ENCODE measurements at regions of chr20 and their contacts with region 1.

Region 1: DNA sequence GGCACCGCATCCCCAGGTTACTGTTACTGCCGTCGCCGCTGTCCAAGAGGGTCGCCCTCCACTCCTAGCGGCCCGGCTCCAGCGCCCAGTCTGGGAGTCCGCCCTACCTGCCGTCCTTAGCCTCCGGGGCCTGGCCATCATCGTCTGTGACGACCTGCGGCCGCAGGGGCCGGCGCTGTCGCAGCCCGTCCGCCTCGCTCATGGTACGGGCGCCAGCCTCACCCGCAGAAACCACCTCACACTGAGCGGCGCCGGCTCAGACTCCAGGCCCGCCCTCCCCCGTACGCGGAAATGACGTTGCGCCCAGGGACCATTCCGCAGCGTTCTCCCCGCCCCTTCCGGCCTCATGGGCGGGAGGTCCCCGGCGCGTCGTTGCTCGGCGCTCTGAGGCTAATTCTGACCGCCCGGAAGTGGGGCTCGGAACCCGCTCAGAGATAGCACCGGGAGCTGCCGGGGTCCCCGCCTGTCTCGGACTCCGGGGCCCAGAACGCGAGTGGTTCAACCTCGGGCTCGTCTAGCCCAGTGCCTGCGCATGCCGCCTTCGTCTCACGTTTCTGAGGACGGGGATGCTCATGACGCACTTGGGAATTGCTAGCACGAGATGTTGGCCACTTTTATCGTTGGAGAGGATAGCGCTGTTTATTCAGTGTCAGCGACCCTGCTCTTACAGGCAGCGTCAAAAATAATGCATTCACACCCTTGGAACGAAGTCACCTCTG is at the start of gene APMAP:
- DNase-seq: peak; percentile 81 to 97
- H3K4me3 ChIP-seq: peak within 1 kb of the TSS; percentile 83 to 92
- H3K27ac ChIP-seq: peak within 1 kb of the TSS; percentile 96 to 99
- H3K4me1 ChIP-seq: peaks cover 0 to 17% of the 10 kb centered on the region in 2 donors
- H3K27me3 ChIP-seq: no peaks in the 10 kb centered on the region
- CTCF ChIP-seq: no peak
- total RNA-seq, gene APMAP: 44.8 TPM

Region 2: DNA sequence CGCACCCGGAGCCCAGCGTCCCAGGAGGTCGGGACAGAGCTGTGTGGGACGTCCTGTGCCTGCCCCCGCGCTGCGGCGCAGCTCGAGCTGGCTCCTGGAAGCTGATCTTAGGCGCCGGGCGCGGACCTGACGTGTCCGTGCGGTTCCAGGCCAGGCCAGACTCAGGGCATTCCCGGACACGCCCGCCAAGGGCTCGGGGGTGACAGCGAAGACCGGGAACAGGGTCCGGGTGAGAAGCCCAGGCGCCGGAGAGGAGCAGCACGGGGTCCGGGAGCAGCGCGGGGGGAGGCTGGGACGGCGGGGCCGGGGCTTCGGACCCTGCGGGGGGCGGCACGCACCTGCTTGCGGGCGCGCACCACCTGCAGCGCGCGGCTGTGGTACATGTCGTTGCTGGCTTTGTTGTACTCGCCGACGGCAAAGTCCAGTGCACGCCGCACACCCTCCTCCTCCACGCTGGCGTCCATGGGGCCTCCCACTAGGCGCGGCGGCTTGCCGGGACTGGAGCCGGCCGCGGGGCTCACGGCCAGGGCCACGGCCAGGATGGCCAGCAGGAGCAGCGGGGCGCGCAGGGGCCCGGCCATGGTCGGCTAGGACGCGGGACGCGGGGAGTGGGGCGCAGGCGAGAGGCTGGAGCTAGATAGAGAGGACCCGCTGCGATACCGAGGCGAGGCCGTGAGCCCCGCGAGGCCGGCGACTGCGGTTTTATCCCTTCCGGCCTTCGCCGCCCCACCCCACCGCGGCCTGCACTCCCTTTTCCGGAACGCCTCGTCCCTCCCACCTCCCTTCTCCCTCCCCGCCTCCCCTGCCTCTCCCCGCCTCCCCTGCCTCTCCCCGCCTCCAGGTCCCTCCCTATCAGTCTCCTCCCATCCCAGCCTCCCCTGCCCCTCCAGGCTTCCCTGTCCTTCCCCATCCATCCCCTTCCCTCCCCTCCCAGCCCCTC is 1355.1 kb before region 1 on chr20 and contains the start of gene CST3:
- intact Hi-C with region 1: loop called (anchors 5 kb)
- DNase-seq: peak; percentile 55 to 93
- H3K4me3 ChIP-seq: peak within 1 kb of the TSS; percentile 89 to 94
- H3K27ac ChIP-seq: peak within 1 kb of the TSS; percentile 91 to 99
- H3K4me1 ChIP-seq: peaks cover 10 to 22% of the 10 kb centered on the region in 2 donors
- H3K27me3 ChIP-seq: no peaks in the 10 kb centered on the region
- CTCF ChIP-seq: peak in 1 of 3 experiments; percentile 9
- total RNA-seq, gene CST3: 2,609 TPM

Region 3: GRCh38 chr20:25065625-25066338 is 73.1 kb after region 1 on chr20:
- intact Hi-C with region 1: loop called (anchors 1 kb)
- DNase-seq: peak in 1 of 2 donors; percentile 85
- H3K4me3 ChIP-seq: no peak overlapping the region
- H3K27ac ChIP-seq: no peak overlapping the region
- H3K4me1 ChIP-seq: no peaks in the 10 kb centered on the region
- H3K27me3 ChIP-seq: no peaks in the 10 kb centered on the region
- CTCF ChIP-seq: peak; percentile 72 to 85 (median 78)

Region 4: DNA sequence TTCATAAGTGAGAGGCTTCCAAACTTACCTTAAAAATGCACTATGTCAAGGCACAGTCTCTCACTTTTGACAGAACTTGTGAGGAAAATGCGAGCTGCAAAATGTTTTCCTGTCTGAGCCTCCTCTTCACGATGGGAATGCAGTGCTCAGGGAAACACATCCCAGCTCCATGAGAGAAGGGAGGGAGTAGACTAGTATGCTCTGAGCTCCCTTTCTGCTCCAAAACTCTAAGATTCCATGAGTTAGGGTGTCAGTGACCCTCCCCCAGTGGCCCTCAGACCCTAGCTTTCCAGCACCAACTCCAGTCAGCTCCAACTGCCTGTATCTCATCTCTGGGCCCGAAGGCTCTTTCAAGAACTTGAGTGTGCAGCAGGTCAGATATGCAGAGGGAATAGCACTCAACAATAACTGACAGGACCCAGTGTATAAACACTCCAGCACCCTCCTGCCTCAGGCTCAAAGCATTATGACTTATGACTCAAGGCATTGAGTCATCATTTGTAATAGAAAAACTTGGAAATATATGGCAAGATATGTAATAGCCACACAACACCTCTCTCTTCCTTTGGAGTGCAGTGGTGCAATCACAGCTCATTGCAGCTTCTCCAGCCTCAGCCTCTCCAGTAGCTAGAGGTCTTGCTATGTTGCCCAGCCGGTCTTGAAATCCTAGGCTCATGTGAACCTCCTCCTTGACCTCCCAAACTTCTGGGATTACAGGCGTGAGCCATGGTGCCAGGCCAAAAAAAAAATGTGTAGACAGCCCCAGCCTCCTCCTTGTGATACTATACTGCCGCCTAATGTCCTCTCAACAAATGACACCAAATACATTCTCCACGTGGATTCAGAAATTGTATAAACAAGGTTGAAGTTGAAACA is 186.2 kb after region 1 on chr20:
- intact Hi-C with region 1: loop called (anchors 1 kb)
- DNase-seq: peak in 1 of 2 donors; percentile 71
- H3K4me3 ChIP-seq: no peak overlapping the region
- H3K27ac ChIP-seq: peak overlapping the region; percentile 9 to 22
- H3K4me1 ChIP-seq: peaks cover 0 to 4% of the 10 kb centered on the region in 2 donors
- H3K27me3 ChIP-seq: no peaks in the 10 kb centered on the region
- CTCF ChIP-seq: peak; percentile 52 to 76 (median 67)

Region 5: DNA sequence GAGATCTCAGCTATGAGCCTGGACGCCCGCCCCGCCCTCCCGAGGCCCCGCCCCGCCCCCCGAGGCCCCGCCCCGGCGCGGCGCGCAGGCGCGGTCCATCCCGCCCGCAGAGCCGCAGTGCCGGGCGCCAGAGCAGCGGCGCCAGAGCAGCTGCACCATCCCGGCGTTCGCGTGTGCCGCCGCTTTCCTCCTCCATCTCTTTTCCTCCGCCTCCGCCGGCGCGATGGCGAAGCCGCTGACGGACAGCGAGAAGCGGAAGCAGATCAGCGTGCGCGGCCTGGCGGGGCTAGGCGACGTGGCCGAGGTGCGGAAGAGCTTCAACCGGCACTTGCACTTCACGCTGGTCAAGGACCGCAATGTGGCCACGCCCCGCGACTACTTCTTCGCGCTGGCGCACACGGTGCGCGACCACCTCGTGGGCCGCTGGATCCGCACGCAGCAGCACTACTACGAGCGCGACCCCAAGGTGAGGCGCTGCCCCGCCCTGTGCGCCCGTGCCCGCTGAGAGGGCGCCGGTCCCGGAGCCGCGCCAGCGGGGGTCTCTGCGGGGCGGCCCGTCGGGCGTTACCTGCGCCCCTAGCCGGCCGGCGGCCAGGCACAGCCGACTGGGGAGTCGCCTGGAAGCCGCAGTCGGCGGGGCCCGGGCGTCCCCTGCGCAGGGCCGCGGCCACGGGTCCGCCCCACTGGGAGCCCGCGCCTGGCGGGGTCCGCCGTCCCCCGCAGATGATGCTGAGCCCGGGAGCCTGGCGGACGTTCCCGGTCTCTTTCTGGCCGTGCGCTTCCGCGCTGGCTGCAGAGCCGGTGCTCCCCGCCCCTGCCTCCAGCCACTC is 255.5 kb after region 1 on chr20 and contains the start of gene PYGB:
- intact Hi-C with region 1: loop called (anchors 2 kb)
- DNase-seq: peak in 1 of 2 donors; percentile 85
- H3K4me3 ChIP-seq: peak within 1 kb of the TSS; percentile 77 to 98
- H3K27ac ChIP-seq: peak within 1 kb of the TSS; percentile 94 to 98
- H3K4me1 ChIP-seq: peaks cover 12 to 38% of the 10 kb centered on the region in 2 donors
- H3K27me3 ChIP-seq: no peaks in the 10 kb centered on the region
- CTCF ChIP-seq: no peak
- total RNA-seq, gene PYGB: 125 TPM

Region 6: GRCh38 chr20:25390538-25391528 is 398.2 kb after region 1 on chr20 and contains the start of gene ABHD12:
- intact Hi-C with region 1: loop called (anchors 2 kb)
- DNase-seq: peak; percentile 91 to 99
- H3K4me3 ChIP-seq: peak within 1 kb of the TSS; percentile 83 to 99
- H3K27ac ChIP-seq: peak within 1 kb of the TSS; percentile 70 to 91
- H3K4me1 ChIP-seq: peaks cover 0 to 3% of the 10 kb centered on the region in 2 donors
- H3K27me3 ChIP-seq: no peaks in the 10 kb centered on the region
- CTCF ChIP-seq: no peak
- total RNA-seq, gene ABHD12: 24.3 TPM

Region 7: GRCh38 chr20:25696384-25697131 is 703.9 kb after region 1 on chr20 and contains the start of gene ZNF337:
- intact Hi-C with region 1: loop called (anchors 5 kb)
- DNase-seq: peak; percentile 85 to 98
- H3K4me3 ChIP-seq: peak within 1 kb of the TSS; percentile 74 to 82
- H3K27ac ChIP-seq: peak within 1 kb of the TSS; percentile 92 to 93
- H3K4me1 ChIP-seq: peaks cover 4 to 9% of the 10 kb centered on the region in 2 donors
- H3K27me3 ChIP-seq: no peaks in the 10 kb centered on the region
- CTCF ChIP-seq: peak in 2 of 3 experiments; percentile 27 to 31
- total RNA-seq, gene ZNF337: 3.4 TPM

Measured in ascending aorta (tissue), 2 donors.